Mammary epithelial cell (primary cell): ENCODE measurements at regions of chr12 and their contacts with region 1.

Region 1: GRCh38 chr12:23093488-23093887 is 468.5 kb downstream of the ETNK1 start:
- DNase-seq: peak; percentile 44
- H3K4me3 ChIP-seq: no peak overlapping the region
- H3K27ac ChIP-seq: no peak overlapping the region
- H3K4me1 ChIP-seq: peaks cover 6% of the 10 kb centered on the region
- H3K27me3 ChIP-seq: no peaks in the 10 kb centered on the region
- CTCF ChIP-seq: no peak

Region 2: GRCh38 chr12:22981711-22982110 is 111.8 kb before region 1 on chr12:
- CTCF ChIA-PET with region 1: no interaction called
- dilution Hi-C with region 1: no loop called
- in situ Hi-C with region 1: no loop called
- intact Hi-C with region 1: loop called (anchors 2 kb)
- DNase-seq: peak; percentile 15
- H3K4me3 ChIP-seq: no peak overlapping the region
- H3K27ac ChIP-seq: no peak overlapping the region
- H3K4me1 ChIP-seq: peaks cover 22% of the 10 kb centered on the region
- H3K27me3 ChIP-seq: no peaks in the 10 kb centered on the region
- CTCF ChIP-seq: peak; percentile 29 to 47